Right ventricle myocardium inferior (tissue), 1 donor: ENCODE measurements at regions of chr7 and their contacts with region 1.

Region 1: GRCh38 chr7:155344600-155345433 is 47.1 kb downstream of the INSIG1 start:
- DNase-seq: peak; percentile 93
- ATAC-seq: peak; percentile 94

Region 2: GRCh38 chr7:155053002-155053401 is 291.8 kb before region 1 on chr7:
- intact Hi-C with region 1: no loop called
- DNase-seq: no peak
- ATAC-seq: no peak

Region 3: GRCh38 chr7:155282671-155283070 is 62.1 kb before region 1 on chr7:
- intact Hi-C with region 1: no loop called
- DNase-seq: no peak
- ATAC-seq: no peak

Region 4: DNA sequence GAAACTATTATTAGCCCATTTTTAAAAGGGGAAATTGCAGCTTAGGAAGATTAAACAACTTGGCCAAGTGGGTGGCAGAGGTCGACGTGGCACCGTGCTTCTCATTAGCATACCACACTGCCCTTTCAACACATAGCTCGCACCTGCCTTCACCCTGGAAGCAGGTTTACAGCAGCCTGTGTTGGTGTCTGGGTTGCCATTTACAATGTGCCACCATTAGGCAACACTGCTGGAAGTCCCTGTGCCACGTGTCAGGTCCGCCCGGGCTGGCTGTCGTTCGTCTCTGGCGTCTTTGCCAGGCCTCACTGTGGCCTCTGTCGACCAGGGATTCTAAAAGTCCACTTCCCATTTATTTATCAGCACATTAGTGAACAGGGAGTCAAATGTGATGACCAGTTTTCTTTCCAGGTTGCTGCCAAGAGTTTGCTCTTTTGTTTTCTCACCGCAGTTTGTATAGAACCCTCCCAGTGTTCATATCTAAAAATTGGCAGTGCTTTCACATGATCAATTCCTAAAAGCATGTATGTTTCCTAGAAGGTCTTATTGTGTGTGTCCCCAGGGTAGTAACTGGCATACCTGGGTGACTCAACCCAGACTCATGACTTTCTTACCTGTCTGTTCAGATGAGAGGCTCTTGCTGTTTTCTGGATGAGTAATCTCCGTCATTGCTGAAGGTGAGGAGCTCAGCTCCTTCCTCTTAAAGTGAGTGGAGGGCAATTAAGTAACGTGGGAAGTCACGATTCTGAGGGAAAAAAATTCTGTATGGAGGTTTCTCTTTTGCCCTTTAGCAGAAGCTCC is 37.9 kb before region 1 on chr7:
- intact Hi-C with region 1: loop called (anchors 2 kb)
- DNase-seq: no peak
- ATAC-seq: no peak

Region 5: GRCh38 chr7:155322530-155322929 is 22.3 kb before region 1 on chr7:
- intact Hi-C with region 1: no loop called
- DNase-seq: no peak
- ATAC-seq: no peak